ENCODE measurements at regions of chr19 and their contacts with region 1.

Region 1: DNA sequence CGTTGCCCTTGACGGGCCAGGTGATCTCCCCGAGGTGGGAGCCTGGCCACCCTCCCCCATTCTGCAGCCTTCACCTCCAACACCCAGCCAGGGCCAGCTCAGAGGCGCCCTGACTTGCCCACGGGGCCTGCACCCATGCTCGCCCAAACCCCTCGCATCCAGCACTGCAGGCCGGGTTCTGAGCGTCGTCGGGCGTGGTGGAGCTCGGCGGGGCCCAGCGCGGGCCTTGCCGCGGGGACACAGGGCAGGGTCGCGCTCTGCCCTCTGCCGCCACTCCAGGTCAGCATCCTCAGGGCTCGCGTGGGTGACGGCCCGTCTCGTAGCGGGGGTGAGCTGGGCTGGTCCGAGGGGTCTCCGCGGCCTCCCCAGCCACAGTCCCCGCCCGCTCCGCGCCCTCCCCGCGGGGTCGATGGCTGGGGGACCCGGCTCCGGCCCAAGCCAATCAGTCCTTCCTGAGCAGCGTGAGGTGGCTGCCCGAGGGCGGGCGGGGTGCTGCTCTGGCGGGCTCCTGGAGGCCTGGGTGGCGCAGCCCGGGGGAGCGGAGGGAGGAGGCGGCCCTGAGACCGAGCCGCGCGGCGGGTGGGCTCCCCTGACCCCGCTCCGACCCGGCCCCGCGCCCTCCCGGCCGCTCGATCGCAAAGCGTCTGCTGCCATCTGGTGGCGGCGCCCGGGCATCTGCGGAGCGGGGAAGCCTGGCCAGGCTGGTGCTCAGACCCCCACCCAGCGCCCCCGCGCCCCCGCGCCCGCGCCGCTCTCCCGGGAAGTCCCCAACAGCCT is 61.4 kb downstream of the CCNE1 start:
- DNase-seq: peak in 1 of 2 experiments; percentile 34
- H3K4me3 ChIP-seq: peak overlapping the region; percentile 57; the same call in 1 of the 2 replicates
- H3K27ac ChIP-seq: no peak overlapping the region
- H3K4me1 ChIP-seq: peaks cover 17% of the 10 kb centered on the region
- H3K27me3 ChIP-seq: no peaks in the 10 kb centered on the region
- CTCF ChIP-seq: peak; percentile 79

Region 2: DNA sequence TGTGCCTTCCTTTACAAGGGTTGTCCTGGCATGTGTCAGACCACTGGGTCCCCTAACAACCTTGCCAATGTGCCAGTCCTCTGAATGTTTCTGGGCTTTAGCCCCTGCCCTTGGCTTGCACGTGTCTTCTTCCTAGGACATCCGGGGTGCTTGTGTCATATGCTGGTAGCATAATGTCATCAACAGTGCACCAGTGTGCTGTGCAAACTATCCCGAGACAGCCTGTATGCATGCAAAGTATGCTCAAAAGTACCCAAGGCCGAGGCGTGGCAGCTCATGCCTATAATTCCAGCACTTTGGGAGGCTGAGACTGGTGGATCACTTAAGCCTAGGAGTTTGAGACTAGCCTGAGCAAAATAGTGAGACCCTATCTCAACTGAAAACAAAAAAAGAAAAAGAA is 137.4 kb before region 1 on chr19:
- CTCF ChIA-PET with region 1: interaction called, 17 read pairs
- POLR2A ChIA-PET with region 1: no interaction called
- intact Hi-C with region 1: loop called (anchors 1 kb)
- DNase-seq: no peak
- H3K4me3 ChIP-seq: no peak overlapping the region
- H3K27ac ChIP-seq: no peak overlapping the region
- H3K4me1 ChIP-seq: no peaks in the 10 kb centered on the region
- H3K27me3 ChIP-seq: peaks cover 88% of the 10 kb centered on the region
- CTCF ChIP-seq: no peak

Region 3: DNA sequence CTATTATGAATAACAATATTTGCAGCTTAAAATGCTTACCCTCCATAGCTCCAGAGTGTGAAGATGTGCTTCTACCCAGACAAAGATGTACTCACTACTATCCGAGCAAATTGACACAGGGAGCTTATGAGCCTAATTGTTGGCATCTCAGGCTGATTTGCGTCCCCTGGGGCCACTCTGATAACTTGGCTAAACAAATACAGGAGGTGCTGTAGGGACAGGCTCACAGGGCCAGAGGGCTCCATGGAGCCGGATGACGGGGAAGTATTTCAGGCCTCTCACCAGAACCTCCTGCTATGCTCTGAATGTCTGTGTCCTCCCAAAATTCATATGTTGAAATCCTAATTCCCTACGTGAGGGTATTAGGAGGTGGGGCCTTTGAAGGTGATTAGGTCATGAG is 131.4 kb before region 1 on chr19:
- CTCF ChIA-PET with region 1: interaction called, 17 read pairs
- POLR2A ChIA-PET with region 1: no interaction called
- intact Hi-C with region 1: no loop called
- DNase-seq: no peak
- H3K4me3 ChIP-seq: no peak overlapping the region
- H3K27ac ChIP-seq: no peak overlapping the region
- H3K4me1 ChIP-seq: no peaks in the 10 kb centered on the region
- H3K27me3 ChIP-seq: peaks cover 65% of the 10 kb centered on the region
- CTCF ChIP-seq: no peak

Region 4: GRCh38 chr19:29771708-29772414 is 101.4 kb before region 1 on chr19:
- CTCF ChIA-PET with region 1: no interaction called
- POLR2A ChIA-PET with region 1: no interaction called
- intact Hi-C with region 1: loop called (anchors 1 kb)
- DNase-seq: peak in 1 of 2 experiments; percentile 51
- H3K4me3 ChIP-seq: no peak overlapping the region
- H3K27ac ChIP-seq: no peak overlapping the region
- H3K4me1 ChIP-seq: no peaks in the 10 kb centered on the region
- H3K27me3 ChIP-seq: no peaks in the 10 kb centered on the region
- CTCF ChIP-seq: peak; percentile 72

Region 5: DNA sequence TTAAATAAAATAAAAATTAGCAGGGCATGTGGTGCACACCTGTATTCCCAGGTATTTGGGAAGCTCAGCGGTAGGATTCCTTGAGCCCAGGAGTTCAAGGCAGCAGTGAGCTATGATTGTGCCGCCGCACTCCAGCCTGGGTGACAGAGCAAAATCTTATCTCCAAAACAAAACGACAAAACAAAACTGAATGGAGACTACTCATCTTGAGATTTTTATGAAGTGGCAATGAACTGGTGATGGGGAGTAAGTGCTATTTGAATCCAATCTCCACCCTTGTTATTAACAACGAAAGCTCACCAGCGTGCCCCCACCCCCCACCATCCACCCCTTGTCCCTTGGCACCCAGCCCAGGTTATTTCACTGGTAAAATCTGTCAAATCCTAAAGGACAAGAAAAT is 23.6 kb after region 1 on chr19:
- CTCF ChIA-PET with region 1: no interaction called
- POLR2A ChIA-PET with region 1: no interaction called
- intact Hi-C with region 1: no loop called
- DNase-seq: no peak
- H3K4me3 ChIP-seq: no peak overlapping the region
- H3K27ac ChIP-seq: no peak overlapping the region
- H3K4me1 ChIP-seq: no peaks in the 10 kb centered on the region
- H3K27me3 ChIP-seq: peaks cover 26% of the 10 kb centered on the region
- CTCF ChIP-seq: no peak